ENCODE measurements at regions of chr2 and their contacts with region 1.

Region 1: GRCh38 chr2:88606371-88607030 is 20.8 kb downstream of the EIF2AK3 start:
- DNase-seq: peak; percentile 72
- ATAC-seq: peak; percentile 93
- H3K4me3 ChIP-seq: peak overlapping the region in 2 of 5 experiments; percentile 1 to 28
- H3K4me3 Mint-ChIP-seq: peak overlapping the region; percentile 57
- H3K27ac ChIP-seq: peak overlapping the region; percentile 86 to 94
- H3K27ac Mint-ChIP-seq: peak overlapping the region; percentile 94
- H3K4me1 ChIP-seq: peaks cover 78 to 89% of the 10 kb centered on the region in 2 donors
- H3K4me1 Mint-ChIP-seq: peaks cover 76% of the 10 kb centered on the region
- H3K27me3 ChIP-seq: no peaks in the 10 kb centered on the region
- H3K27me3 Mint-ChIP-seq: no peaks in the 10 kb centered on the region
- CTCF ChIP-seq: no peak

Region 2: GRCh38 chr2:88590998-88591613 is 15.4 kb before region 1 on chr2:
- CTCF ChIA-PET with region 1: interaction called, 22 read pairs
- POLR2A ChIA-PET with region 1: interaction called, 4 read pairs
- intact Hi-C with region 1: loop called (anchors 2 kb)
- DNase-seq: peak; percentile 81
- ATAC-seq: peak; percentile 95
- H3K4me3 ChIP-seq: no peak overlapping the region
- H3K4me3 Mint-ChIP-seq: no peak overlapping the region
- H3K27ac ChIP-seq: peak overlapping the region in 1 of 2 donors; percentile 45
- H3K27ac Mint-ChIP-seq: peak overlapping the region; percentile 87
- H3K4me1 ChIP-seq: peaks cover 11 to 14% of the 10 kb centered on the region in 2 donors
- H3K4me1 Mint-ChIP-seq: peaks cover 25% of the 10 kb centered on the region
- H3K27me3 ChIP-seq: no peaks in the 10 kb centered on the region
- H3K27me3 Mint-ChIP-seq: no peaks in the 10 kb centered on the region
- CTCF ChIP-seq: peak; percentile 80

Region 3: DNA sequence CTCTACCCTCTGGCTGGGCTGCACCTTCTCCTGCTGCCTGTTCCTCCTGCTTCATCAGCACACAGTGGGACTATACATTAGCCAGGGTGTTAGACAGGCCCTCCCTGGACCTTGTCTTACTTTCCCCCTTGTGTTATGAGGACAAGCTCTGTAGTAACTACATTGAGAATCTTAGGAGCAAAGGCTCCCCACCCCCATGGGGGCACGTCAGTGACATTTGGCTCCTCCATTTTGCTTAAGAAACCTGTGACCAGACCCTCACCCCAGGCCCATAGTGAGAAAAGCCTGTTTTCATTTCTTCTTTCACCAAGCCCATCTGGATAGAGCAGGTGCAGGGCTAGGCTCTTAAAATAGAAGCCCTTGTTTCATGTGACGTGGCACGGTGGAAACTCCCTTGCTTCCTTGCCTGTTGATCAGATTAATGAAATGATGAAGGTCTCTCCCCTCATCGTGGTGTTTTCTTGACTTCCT is 231.7 kb after region 1 on chr2:
- CTCF ChIA-PET with region 1: no interaction called
- POLR2A ChIA-PET with region 1: no interaction called
- intact Hi-C with region 1: loop called (anchors 5 kb)
- DNase-seq: peak; percentile 91
- ATAC-seq: peak; percentile 85
- H3K4me3 ChIP-seq: peak overlapping the region in 2 of 5 experiments; percentile 7 to 45
- H3K4me3 Mint-ChIP-seq: peak overlapping the region; percentile 74
- H3K27ac ChIP-seq: peak overlapping the region; percentile 98 to 100
- H3K27ac Mint-ChIP-seq: peak overlapping the region; percentile 96
- H3K4me1 ChIP-seq: peaks cover 80 to 87% of the 10 kb centered on the region in 2 donors
- H3K4me1 Mint-ChIP-seq: peaks cover 81% of the 10 kb centered on the region
- H3K27me3 ChIP-seq: no peaks in the 10 kb centered on the region
- H3K27me3 Mint-ChIP-seq: no peaks in the 10 kb centered on the region
- CTCF ChIP-seq: no peak

Region 4: GRCh38 chr2:88865801-88866371 is 259.4 kb after region 1 on chr2:
- CTCF ChIA-PET with region 1: no interaction called
- POLR2A ChIA-PET with region 1: no interaction called
- intact Hi-C with region 1: no loop called
- DNase-seq: peak; percentile 69
- ATAC-seq: peak; percentile 84
- H3K4me3 ChIP-seq: peak overlapping the region; percentile 66 to 90 (median 81)
- H3K4me3 Mint-ChIP-seq: peak overlapping the region; percentile 93
- H3K27ac ChIP-seq: peak overlapping the region; percentile 77 to 90
- H3K27ac Mint-ChIP-seq: peak overlapping the region; percentile 94
- H3K4me1 ChIP-seq: peaks cover 6 to 20% of the 10 kb centered on the region in 2 donors
- H3K4me1 Mint-ChIP-seq: peaks cover 42% of the 10 kb centered on the region
- H3K27me3 ChIP-seq: no peaks in the 10 kb centered on the region
- H3K27me3 Mint-ChIP-seq: no peaks in the 10 kb centered on the region
- CTCF ChIP-seq: no peak